Right ventricle myocardium inferior (tissue), 1 donor: ENCODE measurements at regions of chr10 and their contacts with region 1.

Region 1: GRCh38 chr10:30186371-30186875 is 127.0 kb upstream of the JCAD start:
- DNase-seq: no peak
- ATAC-seq: no peak

Region 2: DNA sequence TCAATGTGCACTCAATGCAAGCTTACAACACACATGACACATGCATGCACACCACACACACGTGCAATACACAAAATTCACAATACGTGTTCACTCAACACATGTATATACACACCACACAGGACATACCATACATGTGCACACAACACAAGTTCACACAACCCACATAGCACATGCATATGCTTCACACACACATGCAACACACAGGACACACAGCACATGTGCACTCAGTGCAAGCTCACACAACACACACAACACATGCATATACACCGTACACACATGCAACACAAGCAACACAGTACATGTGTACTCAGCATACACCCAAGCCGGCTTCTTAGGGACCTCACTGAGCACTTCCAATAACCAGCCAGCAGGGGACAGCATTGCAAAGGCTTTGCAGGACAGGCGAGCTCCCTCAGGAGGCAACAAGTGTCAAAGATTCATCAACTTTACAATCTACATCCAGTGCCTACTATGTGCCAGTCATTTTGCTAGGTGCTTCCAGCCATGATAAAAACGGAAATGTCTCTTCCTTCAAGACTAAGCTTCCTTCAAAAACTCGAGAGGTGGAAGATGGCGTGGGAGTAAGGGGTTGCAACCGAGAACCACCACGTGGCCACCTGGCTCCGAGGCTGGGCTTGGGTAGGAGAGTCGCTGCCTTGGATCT is 188.1 kb before region 1 on chr10:
- intact Hi-C with region 1: loop called (anchors 5 kb)
- DNase-seq: peak; percentile 78
- ATAC-seq: peak; percentile 44

Region 3: DNA sequence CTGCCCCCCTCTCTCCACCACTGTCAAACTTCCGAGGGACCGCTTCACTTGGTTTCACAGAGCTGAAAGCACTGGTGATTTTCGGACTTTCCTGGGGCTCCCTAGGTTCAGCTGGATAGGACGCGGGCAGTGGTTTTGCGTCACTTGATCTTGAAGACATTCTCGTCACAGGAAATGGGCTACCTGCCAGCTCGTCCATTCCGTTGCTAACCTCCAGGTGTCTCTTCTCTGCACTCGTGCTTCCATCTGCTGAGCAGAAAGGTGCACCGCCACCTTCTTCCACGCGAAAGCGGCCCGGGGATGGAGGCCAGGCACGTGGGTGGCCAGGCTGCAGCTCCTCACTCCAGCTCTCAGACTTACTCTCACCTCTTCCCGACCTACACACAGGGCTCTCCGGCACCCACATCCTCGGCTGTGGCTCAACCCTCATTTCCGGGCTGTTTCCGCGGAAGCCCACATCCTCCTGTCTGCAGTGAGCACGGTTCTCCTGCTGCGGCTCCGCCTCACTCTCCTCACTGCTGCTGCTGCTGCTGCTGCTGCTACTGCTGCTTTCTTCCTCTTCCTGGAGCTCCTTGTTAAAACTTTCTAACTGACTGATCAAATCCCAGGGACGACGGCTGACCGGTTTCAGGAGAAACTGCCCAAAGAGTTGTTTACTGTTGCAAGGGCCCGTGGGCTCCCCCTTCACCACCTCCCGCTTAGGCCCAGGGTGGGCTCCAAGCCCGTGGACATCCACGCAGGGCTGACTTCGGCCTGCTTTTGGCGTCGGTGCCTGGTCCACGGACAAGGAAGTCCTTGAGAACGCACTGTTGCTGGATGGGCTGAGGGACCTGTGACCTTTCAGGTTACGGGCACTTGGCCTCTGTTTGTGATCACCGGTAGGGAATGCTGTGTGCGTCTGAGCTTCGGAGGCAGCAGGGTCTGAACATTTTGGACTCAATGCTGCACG is 159.1 kb before region 1 on chr10:
- intact Hi-C with region 1: loop called (anchors 10 kb)
- DNase-seq: peak; percentile 82
- ATAC-seq: peak; percentile 49

Region 4: GRCh38 chr10:30059209-30060107 is 127.0 kb before region 1 on chr10 and contains the start of gene JCAD:
- intact Hi-C with region 1: loop called (anchors 5 kb)
- DNase-seq: peak; percentile 88
- ATAC-seq: peak; percentile 91
- total RNA-seq, gene JCAD: 25.6 TPM

Region 5: GRCh38 chr10:30098613-30099012 is 87.8 kb before region 1 on chr10:
- intact Hi-C with region 1: no loop called
- DNase-seq: no peak
- ATAC-seq: no peak

Region 6: GRCh38 chr10:30155401-30155800 is 31.0 kb before region 1 on chr10:
- intact Hi-C with region 1: loop called (anchors 1 kb)
- DNase-seq: no peak
- ATAC-seq: no peak

Region 7: DNA sequence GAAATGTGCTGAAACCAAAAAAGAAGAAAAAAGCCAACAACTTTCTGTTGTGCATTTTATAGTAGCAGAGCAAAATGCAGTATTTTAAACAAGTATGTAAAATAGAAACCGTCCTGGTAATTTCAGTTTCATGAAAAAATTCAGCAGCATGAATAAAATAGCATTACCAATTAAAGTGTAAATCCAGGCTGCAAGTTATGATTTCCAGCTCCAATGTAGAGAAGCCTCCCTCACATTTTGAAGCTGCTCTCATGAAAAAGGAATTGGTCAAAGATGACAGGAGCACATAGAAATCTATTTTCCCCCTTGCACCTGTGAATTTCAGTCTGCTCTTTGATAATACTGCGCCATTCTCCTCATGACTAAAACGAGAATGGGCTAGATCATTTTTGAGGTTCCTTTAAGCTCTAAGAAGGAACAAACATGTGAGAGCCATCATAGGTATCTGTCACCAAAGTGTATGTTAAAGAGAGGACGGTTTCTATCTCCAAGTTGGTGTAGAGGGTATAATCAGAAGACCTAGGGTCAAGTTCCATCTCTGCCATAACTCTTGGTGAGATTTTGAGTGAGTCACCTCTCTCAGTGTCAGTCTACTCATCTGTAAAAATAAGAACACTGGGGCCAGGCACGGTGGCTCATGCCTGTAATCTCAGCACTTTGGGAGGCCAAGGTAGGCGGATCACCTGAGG is 55.1 kb after region 1 on chr10:
- intact Hi-C with region 1: loop called (anchors 5 kb)
- DNase-seq: no peak
- ATAC-seq: no peak

Region 8: GRCh38 chr10:30270247-30270646 is 83.8 kb after region 1 on chr10:
- intact Hi-C with region 1: no loop called
- DNase-seq: no peak
- ATAC-seq: no peak

Region 9: DNA sequence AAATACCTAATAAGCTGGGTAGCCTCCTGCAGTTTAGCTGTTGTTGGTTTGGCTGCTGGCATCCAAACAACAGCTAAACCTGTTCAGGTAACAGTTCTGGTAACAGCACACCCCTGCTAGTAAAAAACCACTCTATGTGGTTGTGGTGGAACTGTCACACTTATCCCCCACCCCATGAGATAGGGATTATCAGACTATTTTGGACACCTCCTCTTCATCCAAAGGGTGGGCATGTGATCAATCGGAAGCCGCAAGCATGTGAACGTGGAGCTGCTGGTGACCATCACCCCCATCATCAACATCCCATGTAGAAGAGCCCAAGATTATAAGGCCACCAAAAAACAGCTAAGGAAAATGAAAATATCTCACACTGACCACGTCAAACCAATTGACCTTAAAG is 160.2 kb after region 1 on chr10:
- intact Hi-C with region 1: no loop called
- DNase-seq: no peak
- ATAC-seq: no peak